IMR-90 (cell line): ENCODE measurements at regions of chrX and their contacts with region 1.

Region 1: GRCh38 chrX:68511255-68511654 is 12.4 kb downstream of the YIPF6 start:
- DNase-seq: peak; percentile 48
- ATAC-seq: peak; percentile 86
- H3K4me3 ChIP-seq: no peak overlapping the region
- H3K27ac ChIP-seq: no peak overlapping the region
- H3K4me1 ChIP-seq: no peaks in the 10 kb centered on the region
- H3K27me3 ChIP-seq: no peaks in the 10 kb centered on the region
- CTCF ChIP-seq: peak; percentile 77
- POLR2A ChIP-seq: no peak
- RAD21 ChIP-seq: peak; percentile 74

Region 2: DNA sequence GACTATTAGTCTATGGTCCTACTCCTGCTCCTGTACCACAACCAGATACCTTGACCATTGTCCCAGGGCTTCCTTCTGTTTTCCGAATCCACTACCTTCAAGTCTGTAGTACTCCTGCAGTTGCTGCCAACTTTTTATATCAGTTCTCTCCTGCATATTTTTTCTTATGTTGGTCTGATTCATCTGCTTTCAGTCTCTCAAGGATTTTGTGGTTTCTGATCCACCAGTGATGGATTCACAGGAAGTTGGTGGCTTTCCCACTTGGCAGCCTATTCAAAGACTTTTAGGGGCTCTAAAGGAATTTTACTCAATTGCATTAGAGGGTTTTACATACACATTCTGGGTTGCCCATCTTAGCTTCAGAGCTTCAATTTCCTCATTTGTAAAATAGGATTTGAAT is 1802.2 kb after region 1 on chrX:
- CTCF ChIA-PET with region 1: no interaction called
- POLR2A ChIA-PET with region 1: no interaction called
- dilution Hi-C with region 1: no loop called
- in situ Hi-C with region 1: no loop called
- intact Hi-C with region 1: loop called (anchors 5 kb)
- DNase-seq: peak; percentile 52
- ATAC-seq: no peak
- H3K4me3 ChIP-seq: no peak overlapping the region
- H3K27ac ChIP-seq: no peak overlapping the region
- H3K4me1 ChIP-seq: 0 out of 2 replicates have a peak, but pooled peaks cover 2% of the 10 kb centered on the region
- H3K27me3 ChIP-seq: no peaks in the 10 kb centered on the region; the same call in 1 of the 2 replicates
- CTCF ChIP-seq: no peak
- POLR2A ChIP-seq: no peak
- RAD21 ChIP-seq: no peak